ENCODE measurements at regions of chr5 and their contacts with region 1.

Region 1: DNA sequence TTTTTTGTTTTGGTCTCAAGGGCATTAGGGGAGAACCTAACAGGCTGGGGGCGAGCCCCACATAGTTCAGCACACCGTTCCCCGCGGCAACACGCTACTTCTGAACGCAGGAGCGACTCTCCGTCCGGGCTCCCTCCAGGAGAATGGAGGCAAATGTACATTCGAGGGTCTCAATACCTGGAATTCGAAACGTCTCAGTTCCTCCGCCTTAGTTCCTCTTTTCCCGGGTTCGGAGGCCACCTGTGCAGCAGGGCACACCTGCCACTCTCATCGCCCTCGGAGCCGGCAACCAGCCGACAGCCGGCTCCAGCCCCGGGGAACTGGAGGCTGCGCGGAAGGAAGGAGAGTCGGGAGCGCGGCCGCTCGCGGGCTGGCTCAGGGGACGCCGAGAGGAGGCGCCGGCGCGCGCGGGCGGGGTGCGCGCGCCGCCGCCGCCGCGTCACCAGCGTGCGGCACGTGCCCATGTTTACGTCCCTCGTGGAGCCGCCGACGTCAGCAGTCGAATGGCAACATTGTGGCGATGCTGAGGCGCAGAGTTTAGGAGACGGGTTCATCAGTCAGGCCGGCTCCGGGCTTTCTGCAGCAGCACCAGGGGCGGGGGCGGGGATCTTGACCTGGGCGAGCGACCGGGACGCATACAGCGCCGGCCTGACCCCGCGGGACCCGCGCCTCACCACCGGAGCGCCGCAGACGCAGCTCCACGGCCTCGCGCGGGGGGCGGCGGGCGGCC is at the start of gene JMY:
- DNase-seq: peak; percentile 83 to 90 (median 86)
- H3K4me3 ChIP-seq: peak within 1 kb of the TSS; percentile 83 to 93
- H3K4me3 Mint-ChIP-seq: peak within 1 kb of the TSS; percentile 95 to 99 (median 96)
- H3K27ac ChIP-seq: peak within 1 kb of the TSS; percentile 96
- H3K27ac Mint-ChIP-seq: peak within 1 kb of the TSS; percentile 96 to 99 (median 98)
- H3K4me1 ChIP-seq: peaks cover 40% of the 10 kb centered on the region
- H3K4me1 Mint-ChIP-seq: peaks cover 15 to 33% (median 25%) of the 10 kb centered on the region in 4 donors
- H3K27me3 ChIP-seq: no peaks in the 10 kb centered on the region
- H3K27me3 Mint-ChIP-seq: peaks cover 0 to 2% of the 10 kb centered on the region in 2 donors
- total RNA-seq, gene JMY: 25.7 to 29.7 TPM

Region 2: GRCh38 chr5:77775790-77776553 is 1459.8 kb before region 1 on chr5 and contains the start of gene TBCA:
- CTCF ChIA-PET with region 1: no interaction called
- POLR2A ChIA-PET with region 1: no interaction called
- intact Hi-C with region 1: loop called (anchors 5 kb)
- DNase-seq: peak; percentile 91 to 94 (median 93)
- H3K4me3 ChIP-seq: peak within 1 kb of the TSS; percentile 61 to 85
- H3K4me3 Mint-ChIP-seq: peak within 1 kb of the TSS; percentile 90 to 98 (median 96)
- H3K27ac ChIP-seq: peak within 1 kb of the TSS; percentile 97
- H3K27ac Mint-ChIP-seq: peak within 1 kb of the TSS; percentile 88 to 99 (median 98)
- H3K4me1 ChIP-seq: peaks cover 46% of the 10 kb centered on the region
- H3K4me1 Mint-ChIP-seq: peaks cover 33 to 50% (median 45%) of the 10 kb centered on the region in 4 donors
- H3K27me3 ChIP-seq: no peaks in the 10 kb centered on the region
- H3K27me3 Mint-ChIP-seq: no peaks in the 10 kb centered on the region
- total RNA-seq, gene TBCA: 80.4 to 97.2 TPM

Region 3: DNA sequence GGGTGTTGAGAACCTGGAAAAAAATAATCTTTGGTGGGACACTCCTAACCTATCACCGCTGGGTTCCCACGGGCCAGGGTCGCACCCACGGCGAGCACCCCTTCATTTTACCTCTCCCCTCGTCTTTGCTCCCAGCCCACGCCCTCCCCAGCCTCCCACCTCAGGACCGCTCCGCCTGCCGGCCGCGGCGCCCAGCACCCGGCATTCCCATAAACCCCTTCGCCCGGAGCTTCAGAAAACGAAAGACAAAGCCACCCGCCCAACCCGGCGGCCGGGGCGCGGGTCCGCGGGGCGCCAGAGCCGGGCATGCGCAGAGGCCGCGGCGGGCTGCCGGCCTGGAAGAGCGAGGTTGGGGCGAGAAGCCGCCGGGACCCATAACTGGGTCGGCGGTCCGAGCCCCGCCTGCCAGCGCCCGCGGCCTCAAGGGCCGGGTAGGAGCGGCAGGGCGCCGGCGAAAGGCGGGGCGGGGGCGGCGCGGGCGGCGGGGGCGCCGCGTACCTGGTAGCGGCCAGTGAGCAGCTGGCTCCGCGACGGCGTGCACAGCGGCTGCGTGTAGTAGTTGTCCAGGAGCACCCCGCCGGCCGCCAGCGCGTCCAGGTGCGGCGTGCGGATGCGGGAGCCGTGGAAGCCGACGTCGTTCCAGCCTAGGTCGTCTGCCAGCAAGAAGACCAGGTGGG is 251.2 kb before region 1 on chr5:
- CTCF ChIA-PET with region 1: no interaction called
- POLR2A ChIA-PET with region 1: interaction called, 16 read pairs
- intact Hi-C with region 1: loop called (anchors 2 kb)
- DNase-seq: peak; percentile 76 to 85 (median 80)
- H3K4me3 ChIP-seq: peak overlapping the region; percentile 34 to 70
- H3K4me3 Mint-ChIP-seq: peak overlapping the region; percentile 90 to 94 (median 92)
- H3K27ac ChIP-seq: peak overlapping the region; percentile 60
- H3K27ac Mint-ChIP-seq: peak overlapping the region; percentile 87 to 95 (median 93)
- H3K4me1 ChIP-seq: peaks cover 17% of the 10 kb centered on the region
- H3K4me1 Mint-ChIP-seq: peaks cover 18 to 31% (median 23%) of the 10 kb centered on the region in 4 donors
- H3K27me3 ChIP-seq: no peaks in the 10 kb centered on the region
- H3K27me3 Mint-ChIP-seq: no peaks in the 10 kb centered on the region

Region 4: GRCh38 chr5:79205965-79206364 is 29.8 kb before region 1 on chr5:
- CTCF ChIA-PET with region 1: no interaction called
- POLR2A ChIA-PET with region 1: no interaction called
- intact Hi-C with region 1: no loop called
- DNase-seq: no peak
- H3K4me3 ChIP-seq: no peak overlapping the region
- H3K4me3 Mint-ChIP-seq: no peak overlapping the region
- H3K27ac ChIP-seq: no peak overlapping the region
- H3K27ac Mint-ChIP-seq: no peak overlapping the region
- H3K4me1 ChIP-seq: no peaks in the 10 kb centered on the region
- H3K4me1 Mint-ChIP-seq: no peaks in the 10 kb centered on the region
- H3K27me3 ChIP-seq: no peaks in the 10 kb centered on the region
- H3K27me3 Mint-ChIP-seq: no peaks in the 10 kb centered on the region

Region 5: DNA sequence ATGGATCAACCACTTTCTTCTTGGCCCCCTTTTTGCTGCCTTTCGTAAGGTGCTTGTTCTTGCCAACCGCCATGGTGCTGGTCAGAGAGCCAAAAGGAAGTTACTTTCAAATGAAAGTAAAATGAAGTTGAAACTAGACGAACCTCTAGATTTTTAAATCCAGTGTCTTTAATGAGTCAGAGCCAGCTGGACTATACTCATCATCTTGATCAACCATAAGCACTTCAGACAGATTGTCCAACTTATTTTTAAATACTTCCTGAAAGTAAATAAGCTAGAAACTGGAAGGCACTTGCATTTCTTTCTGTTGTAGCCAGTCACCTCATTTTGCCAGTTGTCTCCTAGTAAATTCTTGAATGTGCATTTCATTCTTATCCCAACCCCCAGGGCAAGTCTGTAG is 49.0 kb after region 1 on chr5:
- CTCF ChIA-PET with region 1: no interaction called
- POLR2A ChIA-PET with region 1: no interaction called
- intact Hi-C with region 1: loop called (anchors 5 kb)
- DNase-seq: no peak
- H3K4me3 ChIP-seq: no peak overlapping the region
- H3K4me3 Mint-ChIP-seq: no peak overlapping the region
- H3K27ac ChIP-seq: no peak overlapping the region
- H3K27ac Mint-ChIP-seq: no peak overlapping the region
- H3K4me1 ChIP-seq: no peaks in the 10 kb centered on the region
- H3K4me1 Mint-ChIP-seq: peaks cover 7 to 28% (median 22%) of the 10 kb centered on the region in 4 donors
- H3K27me3 ChIP-seq: no peaks in the 10 kb centered on the region
- H3K27me3 Mint-ChIP-seq: no peaks in the 10 kb centered on the region

Region 6: GRCh38 chr5:79612667-79613198 is 376.9 kb after region 1 on chr5:
- CTCF ChIA-PET with region 1: no interaction called
- POLR2A ChIA-PET with region 1: no interaction called
- intact Hi-C with region 1: loop called (anchors 5 kb)
- DNase-seq: no peak
- H3K4me3 ChIP-seq: peak overlapping the region; percentile 67 to 94
- H3K4me3 Mint-ChIP-seq: peak overlapping the region; percentile 94 to 100 (median 99)
- H3K27ac ChIP-seq: peak overlapping the region; percentile 96
- H3K27ac Mint-ChIP-seq: peak overlapping the region; percentile 98 to 99 (median 98)
- H3K4me1 ChIP-seq: peaks cover 32% of the 10 kb centered on the region
- H3K4me1 Mint-ChIP-seq: peaks cover 24 to 53% (median 36%) of the 10 kb centered on the region in 4 donors
- H3K27me3 ChIP-seq: no peaks in the 10 kb centered on the region
- H3K27me3 Mint-ChIP-seq: peaks cover 0 to 8% of the 10 kb centered on the region in 2 donors

Region 7: GRCh38 chr5:80654391-80655230 is 1418.8 kb after region 1 on chr5 and contains the starts of genes DHFR and MSH3:
- CTCF ChIA-PET with region 1: no interaction called
- POLR2A ChIA-PET with region 1: no interaction called
- intact Hi-C with region 1: loop called (anchors 10 kb)
- DNase-seq: peak; percentile 86 to 91 (median 91)
- H3K4me3 ChIP-seq: peak within 1 kb of the TSS; percentile 64 to 79
- H3K4me3 Mint-ChIP-seq: peak within 1 kb of the TSS; percentile 86 to 97 (median 94)
- H3K27ac ChIP-seq: peak within 1 kb of the TSS; percentile 67
- H3K27ac Mint-ChIP-seq: peak within 1 kb of the TSS; percentile 86 to 99 (median 97)
- H3K4me1 ChIP-seq: peaks cover 34% of the 10 kb centered on the region
- H3K4me1 Mint-ChIP-seq: peaks cover 20 to 37% (median 27%) of the 10 kb centered on the region in 4 donors
- H3K27me3 ChIP-seq: no peaks in the 10 kb centered on the region
- H3K27me3 Mint-ChIP-seq: no peaks in the 10 kb centered on the region
- total RNA-seq, gene DHFR: 18.5 to 19.2 TPM
- total RNA-seq, gene MSH3: 14.3 to 17.1 TPM